ENCODE measurements at regions of chr11 and their contacts with region 1.

Region 1: GRCh38 chr11:45771566-45772448 is 33.1 kb upstream of the SLC35C1 start:
- DNase-seq: peak; percentile 92
- ATAC-seq: peak; percentile 94
- H3K4me3 Mint-ChIP-seq: peak overlapping the region; percentile 76
- H3K27ac Mint-ChIP-seq: peak overlapping the region; percentile 62
- H3K4me1 Mint-ChIP-seq: peaks cover 12% of the 10 kb centered on the region
- H3K27me3 Mint-ChIP-seq: peaks cover 2% of the 10 kb centered on the region
- CTCF ChIP-seq: peak; percentile 70

Region 2: DNA sequence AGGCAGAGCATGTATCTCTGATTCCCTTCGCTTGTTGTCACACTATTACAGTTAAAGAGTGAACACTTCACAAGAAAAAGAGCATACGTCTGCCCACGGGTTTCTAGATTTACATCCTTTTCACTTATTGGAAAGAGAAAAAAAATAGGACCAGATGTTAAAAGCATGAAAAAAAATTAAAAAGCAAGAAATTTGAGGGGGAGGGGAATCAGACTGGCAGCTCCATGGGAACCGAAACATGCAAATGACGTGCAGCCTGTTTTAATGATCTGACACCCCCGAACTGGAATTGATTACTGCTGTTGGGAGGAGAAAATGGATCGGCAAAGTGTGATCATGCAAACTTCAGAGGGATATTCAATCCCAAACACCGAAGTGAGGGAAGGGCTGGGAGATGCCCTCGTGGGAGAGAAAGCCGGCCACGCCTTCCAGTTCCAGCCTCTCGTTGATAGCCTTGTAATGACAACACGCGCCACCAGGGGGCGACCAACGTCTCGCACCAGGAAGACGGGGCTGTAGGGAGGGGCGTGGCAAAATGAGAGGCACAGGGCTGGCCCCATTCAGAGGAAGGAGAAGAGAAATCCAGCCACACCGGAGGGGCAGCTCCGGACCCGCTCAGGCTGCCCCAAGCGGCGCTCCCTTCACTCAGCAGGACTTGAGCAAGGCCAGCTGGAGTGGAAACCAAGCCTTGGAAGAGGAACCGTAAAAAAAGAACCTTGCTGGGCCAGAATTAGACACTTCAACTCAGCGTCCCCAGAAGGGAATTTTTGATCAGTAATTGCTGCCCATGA is 431.9 kb before region 1 on chr11:
- CTCF ChIA-PET with region 1: interaction called, 31 read pairs
- POLR2A ChIA-PET with region 1: no interaction called
- intact Hi-C with region 1: loop called (anchors 5 kb)
- DNase-seq: peak; percentile 98
- ATAC-seq: peak; percentile 100
- H3K4me3 Mint-ChIP-seq: peak overlapping the region; percentile 55
- H3K27ac Mint-ChIP-seq: no peak overlapping the region
- H3K4me1 Mint-ChIP-seq: peaks cover 10% of the 10 kb centered on the region
- H3K27me3 Mint-ChIP-seq: peaks cover 10% of the 10 kb centered on the region
- CTCF ChIP-seq: peak; percentile 89

Region 3: DNA sequence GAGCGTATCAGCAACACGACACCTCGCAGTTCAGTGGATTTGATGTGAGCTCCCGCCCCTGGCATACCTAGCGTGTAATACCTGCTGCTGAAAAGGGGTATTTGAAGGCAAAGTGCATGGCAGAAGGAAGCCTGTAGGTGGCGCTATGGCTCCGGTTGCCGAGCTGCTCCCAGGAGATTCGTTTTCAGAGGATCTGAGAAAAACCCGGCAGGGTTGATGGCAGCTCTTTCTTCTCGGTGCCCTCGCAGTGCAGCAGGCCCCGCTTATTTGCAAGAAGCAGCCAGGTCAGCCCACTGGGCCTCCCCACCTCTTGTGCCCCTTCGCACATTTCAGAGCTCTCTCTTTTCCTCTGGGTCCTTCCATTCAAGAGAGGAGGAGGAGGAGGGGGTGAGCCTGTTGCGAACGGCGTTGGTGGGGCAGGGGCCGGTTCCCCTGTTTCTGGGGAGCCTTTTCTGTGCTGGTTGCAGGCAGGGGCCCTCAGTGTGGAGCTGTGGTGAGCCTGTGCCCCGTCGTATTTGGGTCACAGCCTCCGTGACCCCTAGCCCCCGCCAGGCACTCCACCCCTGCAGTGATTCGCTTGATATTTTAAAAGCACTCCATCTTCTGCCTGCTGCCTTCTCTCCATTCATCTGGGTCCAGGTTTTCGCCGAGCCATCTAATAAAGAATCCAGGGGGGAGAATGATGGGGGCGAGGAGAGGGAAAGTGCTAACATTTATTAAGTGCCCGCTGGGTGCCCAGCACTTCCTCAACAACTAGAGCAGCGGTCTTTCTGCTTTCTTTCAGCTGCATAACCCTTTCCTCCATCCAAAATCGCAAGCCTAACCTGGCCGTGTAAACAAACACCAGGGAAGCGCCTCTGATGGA is 400.3 kb before region 1 on chr11:
- CTCF ChIA-PET with region 1: interaction called, 41 read pairs
- POLR2A ChIA-PET with region 1: no interaction called
- intact Hi-C with region 1: no loop called
- DNase-seq: peak; percentile 79
- ATAC-seq: peak; percentile 77
- H3K4me3 Mint-ChIP-seq: no peak overlapping the region
- H3K27ac Mint-ChIP-seq: no peak overlapping the region
- H3K4me1 Mint-ChIP-seq: peaks cover 13% of the 10 kb centered on the region
- H3K27me3 Mint-ChIP-seq: peaks cover 3% of the 10 kb centered on the region
- CTCF ChIP-seq: peak; percentile 94

Region 4: DNA sequence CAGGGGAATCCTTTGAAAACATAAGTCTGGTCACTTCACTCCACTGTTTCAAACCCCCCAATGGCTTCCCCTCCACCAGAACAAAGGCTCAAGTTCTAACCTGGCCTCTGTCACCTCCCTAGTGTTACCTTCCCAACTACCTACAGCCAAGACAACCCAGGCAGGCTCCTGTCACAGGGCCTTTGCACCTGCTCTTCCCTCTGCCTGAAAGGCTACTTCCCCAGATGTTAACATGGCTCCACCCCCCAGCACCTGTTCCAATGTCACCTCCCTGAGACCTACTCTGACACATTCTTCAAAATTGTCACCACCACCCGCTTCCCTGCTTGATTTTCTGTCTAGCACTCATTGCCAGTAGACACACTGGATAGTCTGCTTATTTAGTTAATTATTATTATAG is 259.1 kb before region 1 on chr11:
- CTCF ChIA-PET with region 1: no interaction called
- POLR2A ChIA-PET with region 1: no interaction called
- intact Hi-C with region 1: no loop called
- DNase-seq: no peak
- ATAC-seq: no peak
- H3K4me3 Mint-ChIP-seq: no peak overlapping the region
- H3K27ac Mint-ChIP-seq: no peak overlapping the region
- H3K4me1 Mint-ChIP-seq: no peaks in the 10 kb centered on the region
- H3K27me3 Mint-ChIP-seq: peaks cover 2% of the 10 kb centered on the region
- CTCF ChIP-seq: no peak

Region 5: DNA sequence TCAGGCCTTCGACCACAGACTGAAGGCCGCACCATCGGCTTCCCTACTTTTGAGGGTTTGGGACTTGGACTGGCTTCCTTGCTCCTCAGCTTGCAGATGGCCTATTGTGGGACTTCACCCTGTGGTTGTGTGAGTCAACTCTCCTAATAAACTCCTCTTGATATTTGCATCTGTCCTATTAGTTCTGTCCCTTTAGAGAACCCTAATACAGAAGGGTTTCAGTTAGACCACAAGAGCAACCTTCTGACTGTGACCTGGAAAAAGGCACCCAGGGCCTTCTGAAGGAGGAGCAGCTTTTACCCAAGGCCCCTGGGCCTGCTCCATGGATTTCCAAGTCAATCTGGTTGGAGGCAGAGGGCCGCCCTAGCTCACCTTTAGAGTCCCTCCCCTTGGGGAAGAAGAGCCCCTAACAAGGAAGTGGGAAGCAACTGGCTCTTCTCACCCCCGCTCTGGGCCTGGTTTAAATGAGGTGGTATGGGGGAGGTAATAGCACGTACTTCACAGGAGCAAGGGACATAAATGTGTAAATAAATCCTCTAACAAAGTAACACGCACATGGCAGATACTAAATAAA is 95.2 kb before region 1 on chr11:
- CTCF ChIA-PET with region 1: interaction called, 18 read pairs
- POLR2A ChIA-PET with region 1: no interaction called
- intact Hi-C with region 1: no loop called
- DNase-seq: no peak
- ATAC-seq: no peak
- H3K4me3 Mint-ChIP-seq: no peak overlapping the region
- H3K27ac Mint-ChIP-seq: no peak overlapping the region
- H3K4me1 Mint-ChIP-seq: no peaks in the 10 kb centered on the region
- H3K27me3 Mint-ChIP-seq: no peaks in the 10 kb centered on the region
- CTCF ChIP-seq: no peak

Region 6: DNA sequence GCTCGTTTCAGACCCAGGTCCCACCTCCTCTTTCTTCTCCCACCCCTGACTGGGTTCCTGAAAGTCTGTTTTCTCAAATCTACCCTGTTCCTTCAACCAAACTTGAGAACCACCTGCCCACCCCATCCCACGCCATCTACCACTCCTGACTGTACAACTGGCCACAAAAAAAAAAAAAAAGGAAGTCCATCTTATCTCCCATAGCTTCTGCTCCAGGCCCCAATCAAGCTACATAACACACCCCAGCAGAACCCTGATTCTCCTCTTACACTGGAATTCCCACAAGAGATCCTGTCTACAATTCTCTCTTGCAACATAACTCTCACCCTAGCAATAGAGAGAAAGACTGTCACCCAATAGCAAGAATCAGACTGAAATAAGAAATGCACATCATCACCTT is 67.2 kb before region 1 on chr11:
- CTCF ChIA-PET with region 1: interaction called, 15 read pairs
- POLR2A ChIA-PET with region 1: no interaction called
- intact Hi-C with region 1: no loop called
- DNase-seq: no peak
- ATAC-seq: no peak
- H3K4me3 Mint-ChIP-seq: no peak overlapping the region
- H3K27ac Mint-ChIP-seq: no peak overlapping the region
- H3K4me1 Mint-ChIP-seq: no peaks in the 10 kb centered on the region
- H3K27me3 Mint-ChIP-seq: peaks cover 25% of the 10 kb centered on the region
- CTCF ChIP-seq: no peak

Region 7: DNA sequence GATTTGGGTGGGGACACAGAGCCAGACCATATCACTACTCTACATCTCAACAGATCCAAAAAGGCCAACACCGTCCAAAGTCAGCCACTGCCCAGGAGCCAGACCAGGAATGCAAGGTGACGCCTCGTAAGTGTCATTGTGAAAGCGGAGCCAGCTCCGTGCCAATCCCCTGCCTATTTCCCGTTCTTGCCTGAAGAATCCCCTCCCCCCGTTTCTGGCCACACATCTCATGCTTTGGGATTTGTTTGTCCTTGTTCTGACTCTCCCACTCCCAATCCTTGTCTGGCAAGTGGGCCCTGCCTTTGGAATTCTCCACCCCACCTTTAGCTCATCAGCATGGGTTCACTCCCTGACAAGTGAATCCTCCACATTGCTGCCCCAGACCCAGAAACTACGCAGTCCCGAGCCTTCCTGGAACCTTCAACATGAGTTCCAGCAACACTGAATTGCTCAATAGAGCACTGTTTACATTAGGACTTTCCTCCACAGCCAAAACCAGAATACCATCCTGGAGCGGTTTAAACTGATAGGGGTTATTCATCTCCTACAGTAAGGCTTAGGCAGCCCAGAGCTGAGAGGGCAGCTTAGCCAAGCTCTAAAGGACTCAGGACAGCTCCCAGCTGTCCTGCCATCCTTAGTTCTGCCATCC is 27.1 kb after region 1 on chr11:
- CTCF ChIA-PET with region 1: interaction called, 22 read pairs
- POLR2A ChIA-PET with region 1: no interaction called
- intact Hi-C with region 1: no loop called
- DNase-seq: no peak
- ATAC-seq: no peak
- H3K4me3 Mint-ChIP-seq: no peak overlapping the region
- H3K27ac Mint-ChIP-seq: no peak overlapping the region
- H3K4me1 Mint-ChIP-seq: peaks cover 2% of the 10 kb centered on the region
- H3K27me3 Mint-ChIP-seq: no peaks in the 10 kb centered on the region
- CTCF ChIP-seq: no peak

Region 8: GRCh38 chr11:45846974-45847910 is 75.4 kb after region 1 on chr11 and contains the start of gene CRY2:
- CTCF ChIA-PET with region 1: interaction called, 31 read pairs
- POLR2A ChIA-PET with region 1: no interaction called
- intact Hi-C with region 1: no loop called
- DNase-seq: peak; percentile 99
- ATAC-seq: peak; percentile 92
- H3K4me3 Mint-ChIP-seq: peak within 1 kb of the TSS; percentile 79
- H3K27ac Mint-ChIP-seq: peak within 1 kb of the TSS; percentile 85
- H3K4me1 Mint-ChIP-seq: peaks cover 48% of the 10 kb centered on the region
- H3K27me3 Mint-ChIP-seq: no peaks in the 10 kb centered on the region
- CTCF ChIP-seq: no peak
- total RNA-seq, gene CRY2: 12.3 to 15.7 TPM

Region 9: GRCh38 chr11:45930031-45930794 is 158.4 kb after region 1 on chr11:
- CTCF ChIA-PET with region 1: no interaction called
- POLR2A ChIA-PET with region 1: no interaction called
- intact Hi-C with region 1: no loop called
- DNase-seq: peak; percentile 52
- ATAC-seq: peak; percentile 74
- H3K4me3 Mint-ChIP-seq: no peak overlapping the region
- H3K27ac Mint-ChIP-seq: peak overlapping the region; percentile 51
- H3K4me1 Mint-ChIP-seq: peaks cover 26% of the 10 kb centered on the region
- H3K27me3 Mint-ChIP-seq: no peaks in the 10 kb centered on the region
- CTCF ChIP-seq: no peak

Region 10: DNA sequence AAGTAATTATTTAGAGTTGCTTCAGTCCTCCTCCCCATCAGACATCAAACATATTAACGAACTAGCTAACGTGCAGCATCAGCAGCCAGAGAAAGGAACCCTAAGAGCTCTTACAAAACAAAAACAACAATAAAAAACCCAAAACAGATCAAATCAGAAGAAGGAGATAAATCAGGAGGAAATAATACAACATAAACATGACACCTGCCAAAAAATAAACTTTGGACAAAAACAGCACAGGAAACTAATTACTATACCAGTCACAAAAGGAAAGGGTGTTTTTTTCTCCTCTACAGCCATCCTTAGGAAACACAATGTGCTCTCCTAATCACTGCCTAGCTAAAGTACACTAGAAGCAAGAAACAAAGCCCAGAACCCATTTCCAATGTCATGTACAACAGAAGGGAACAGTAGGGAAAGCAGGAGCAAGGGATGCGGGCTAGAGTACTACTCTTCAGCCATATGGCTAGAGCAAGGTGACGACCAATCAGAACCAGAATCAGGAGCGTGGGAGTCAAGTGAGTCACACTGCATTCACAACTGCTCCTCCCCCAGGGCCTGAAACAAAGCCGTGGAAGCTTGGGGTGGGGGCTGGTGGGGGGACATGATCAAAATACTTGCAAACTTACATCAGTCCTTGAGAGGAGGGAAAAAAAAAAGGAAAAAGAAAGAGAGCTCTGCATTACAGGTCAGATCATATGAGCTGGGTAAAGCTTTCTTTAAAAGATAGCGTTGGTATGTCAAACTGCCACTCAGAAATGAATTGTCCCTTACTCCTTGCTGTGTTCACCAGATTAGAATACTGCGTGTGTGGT is 211.1 kb after region 1 on chr11:
- CTCF ChIA-PET with region 1: no interaction called
- POLR2A ChIA-PET with region 1: no interaction called
- intact Hi-C with region 1: no loop called
- DNase-seq: peak; percentile 66
- ATAC-seq: peak; percentile 89
- H3K4me3 Mint-ChIP-seq: peak overlapping the region; percentile 20
- H3K27ac Mint-ChIP-seq: peak overlapping the region; percentile 40
- H3K4me1 Mint-ChIP-seq: peaks cover 27% of the 10 kb centered on the region
- H3K27me3 Mint-ChIP-seq: no peaks in the 10 kb centered on the region
- CTCF ChIP-seq: no peak

Measured in activated CD8-positive, alpha-beta T cell treated with anti-CD3 and anti-CD28 coated beads for 36 hours (primary cell).